ENCODE measurements at regions of chr9 and their contacts with region 1.

Region 1: DNA sequence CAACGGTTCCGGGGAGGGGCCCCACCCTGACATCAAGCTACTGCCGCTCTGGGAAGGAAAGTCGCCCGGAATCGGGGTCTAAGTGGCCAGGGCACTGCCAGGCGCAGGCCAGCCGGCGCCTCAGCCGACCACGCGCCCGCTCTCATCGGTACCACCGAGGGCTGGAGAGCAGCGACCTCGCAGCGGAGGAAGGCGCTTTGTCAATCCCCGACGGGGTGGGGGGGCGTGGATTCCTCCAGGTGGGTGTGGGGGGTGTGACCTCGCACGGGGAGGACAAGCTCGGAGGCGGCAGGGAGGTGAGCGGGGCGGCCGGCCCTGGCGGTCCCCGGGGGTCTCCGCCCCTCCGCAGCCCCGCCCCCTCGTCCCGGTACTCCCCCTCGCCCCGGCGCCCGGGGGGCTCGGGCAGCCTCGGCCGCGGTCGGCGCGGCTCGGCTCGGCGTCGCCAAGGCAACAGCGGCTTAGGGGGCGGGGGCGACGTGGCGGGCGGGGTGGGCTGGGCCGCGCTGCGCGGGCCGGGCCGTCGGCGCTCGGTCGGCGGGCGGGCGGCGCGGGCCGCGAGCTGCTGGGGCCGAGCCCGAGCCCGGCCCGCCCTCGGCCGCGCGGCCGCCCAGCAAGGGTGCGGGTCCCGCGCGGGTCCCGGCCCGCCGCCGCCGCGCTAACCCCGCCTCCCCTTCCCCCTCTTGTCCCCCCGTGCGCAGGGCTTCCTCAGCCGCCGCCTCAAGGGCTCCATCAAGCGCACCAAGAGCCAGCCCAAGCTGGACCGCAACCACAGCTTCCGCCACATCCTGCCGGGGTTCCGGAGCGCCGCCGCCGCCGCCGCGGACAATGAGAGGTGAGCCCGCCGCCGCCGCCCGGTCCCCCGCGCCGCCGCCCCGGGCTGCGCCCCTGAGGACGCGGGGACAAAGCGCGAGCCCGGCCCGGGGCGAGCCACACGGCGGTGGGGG is 47.5 kb downstream of the DAB2IP start:
- DNase-seq: peak; percentile 74 to 78
- ATAC-seq: peak; percentile 9 to 78 (median 40)
- H3K4me3 ChIP-seq: peak overlapping the region; percentile 44 to 70 (median 57)
- H3K27ac ChIP-seq: peak overlapping the region; percentile 25 to 89 (median 80)
- H3K4me1 ChIP-seq: peaks cover 26 to 66% (median 43%) of the 10 kb centered on the region in 9 donors
- H3K27me3 ChIP-seq: peaks cover 0 to 54% (median 0%) of the 10 kb centered on the region in 7 donors
- CTCF ChIP-seq: no peak

Region 2: GRCh38 chr9:121634329-121635261 is 64.3 kb before region 1 on chr9:
- intact Hi-C with region 1: loop called in 1 of 10 experiments (anchors 5 kb)
- DNase-seq: no peak
- ATAC-seq: peak; percentile 61 to 80 (median 74)
- H3K4me3 ChIP-seq: no peak overlapping the region
- H3K27ac ChIP-seq: peak overlapping the region in 5 of 10 donors; percentile 15 to 70 (median 51)
- H3K4me1 ChIP-seq: peaks cover 17 to 69% (median 47%) of the 10 kb centered on the region in 9 donors
- H3K27me3 ChIP-seq: no peaks in the 10 kb centered on the region
- CTCF ChIP-seq: peak; percentile 43 to 75 (median 60)

Region 3: GRCh38 chr9:121735065-121735789 is 36.3 kb after region 1 on chr9:
- intact Hi-C with region 1: loop called in 4 of 10 experiments (anchors 5 to 10 kb)
- DNase-seq: no peak
- ATAC-seq: peak in 5 of 8 donors; percentile 7 to 35 (median 11)
- H3K4me3 ChIP-seq: peak overlapping the region in 9 of 10 donors; percentile 37 to 61 (median 56)
- H3K27ac ChIP-seq: peak overlapping the region; percentile 77 to 98 (median 89)
- H3K4me1 ChIP-seq: peaks cover 54 to 97% (median 83%) of the 10 kb centered on the region in 9 donors
- H3K27me3 ChIP-seq: peaks cover 0 to 16% (median 0%) of the 10 kb centered on the region in 7 donors
- CTCF ChIP-seq: peak in 7 of 9 donors; percentile 29 to 57 (median 46)

Region 4: GRCh38 chr9:121779381-121780117 is 80.7 kb after region 1 on chr9:
- intact Hi-C with region 1: loop called in 1 of 10 experiments (anchors 1 kb)
- DNase-seq: peak in 1 of 2 donors; percentile 54
- ATAC-seq: peak; percentile 25 to 88 (median 78)
- H3K4me3 ChIP-seq: no peak overlapping the region
- H3K27ac ChIP-seq: peak overlapping the region; percentile 14 to 79 (median 70)
- H3K4me1 ChIP-seq: peaks cover 2 to 68% (median 32%) of the 10 kb centered on the region in 9 donors
- H3K27me3 ChIP-seq: no peaks in the 10 kb centered on the region
- CTCF ChIP-seq: no peak

Region 5: GRCh38 chr9:121929893-121930875 is 231.3 kb after region 1 on chr9:
- intact Hi-C with region 1: loop called in 1 of 10 experiments (anchors 10 kb)
- DNase-seq: no peak
- ATAC-seq: peak in 2 of 8 donors; percentile 30 to 57
- H3K4me3 ChIP-seq: no peak overlapping the region
- H3K27ac ChIP-seq: no peak overlapping the region
- H3K4me1 ChIP-seq: peaks cover 0 to 10% (median 0%) of the 10 kb centered on the region in 9 donors
- H3K27me3 ChIP-seq: no peaks in the 10 kb centered on the region
- CTCF ChIP-seq: peak in 5 of 9 donors; percentile 15 to 41 (median 19)

Measured in heart right ventricle (tissue), 16 donors.